ENCODE measurements at regions of chr2 and their contacts with region 1.

Region 1: GRCh38 chr2:97798416-97798815 is 85.0 kb downstream of the ZAP70 start:
- DNase-seq: no peak
- ATAC-seq: no peak
- H3K4me3 ChIP-seq: no peak overlapping the region
- H3K4me3 Mint-ChIP-seq: no peak overlapping the region
- H3K27ac ChIP-seq: no peak overlapping the region
- H3K27ac Mint-ChIP-seq: no peak overlapping the region
- H3K4me1 ChIP-seq: no peaks in the 10 kb centered on the region
- H3K4me1 Mint-ChIP-seq: no peaks in the 10 kb centered on the region
- H3K27me3 ChIP-seq: no peaks in the 10 kb centered on the region
- H3K27me3 Mint-ChIP-seq: no peaks in the 10 kb centered on the region
- CTCF ChIP-seq: no peak

Region 2: DNA sequence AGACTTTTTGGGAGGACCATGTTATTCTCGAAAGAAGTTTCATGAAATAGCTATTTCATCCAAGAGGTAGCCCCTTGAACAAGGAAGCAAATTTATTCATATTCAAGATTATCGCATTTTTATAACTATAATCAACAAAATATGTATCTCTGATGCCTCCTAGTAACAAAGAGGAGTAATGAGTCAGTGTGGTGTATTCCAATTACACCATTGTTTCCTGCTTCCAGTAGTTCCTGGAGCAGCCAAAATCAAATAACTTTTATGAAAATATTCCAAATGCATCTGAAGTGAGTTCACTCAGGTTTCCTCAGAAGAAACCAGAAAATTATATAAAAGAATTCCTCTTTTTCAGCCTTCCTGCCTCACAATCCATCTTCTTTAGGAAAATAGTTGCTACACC is 251.7 kb before region 1 on chr2:
- CTCF ChIA-PET with region 1: no interaction called
- POLR2A ChIA-PET with region 1: no interaction called
- intact Hi-C with region 1: no loop called
- DNase-seq: no peak
- ATAC-seq: no peak
- H3K4me3 ChIP-seq: no peak overlapping the region
- H3K4me3 Mint-ChIP-seq: no peak overlapping the region
- H3K27ac ChIP-seq: no peak overlapping the region
- H3K27ac Mint-ChIP-seq: no peak overlapping the region
- H3K4me1 ChIP-seq: no peaks in the 10 kb centered on the region
- H3K4me1 Mint-ChIP-seq: no peaks in the 10 kb centered on the region
- H3K27me3 ChIP-seq: no peaks in the 10 kb centered on the region
- H3K27me3 Mint-ChIP-seq: no peaks in the 10 kb centered on the region
- CTCF ChIP-seq: no peak

Region 3: DNA sequence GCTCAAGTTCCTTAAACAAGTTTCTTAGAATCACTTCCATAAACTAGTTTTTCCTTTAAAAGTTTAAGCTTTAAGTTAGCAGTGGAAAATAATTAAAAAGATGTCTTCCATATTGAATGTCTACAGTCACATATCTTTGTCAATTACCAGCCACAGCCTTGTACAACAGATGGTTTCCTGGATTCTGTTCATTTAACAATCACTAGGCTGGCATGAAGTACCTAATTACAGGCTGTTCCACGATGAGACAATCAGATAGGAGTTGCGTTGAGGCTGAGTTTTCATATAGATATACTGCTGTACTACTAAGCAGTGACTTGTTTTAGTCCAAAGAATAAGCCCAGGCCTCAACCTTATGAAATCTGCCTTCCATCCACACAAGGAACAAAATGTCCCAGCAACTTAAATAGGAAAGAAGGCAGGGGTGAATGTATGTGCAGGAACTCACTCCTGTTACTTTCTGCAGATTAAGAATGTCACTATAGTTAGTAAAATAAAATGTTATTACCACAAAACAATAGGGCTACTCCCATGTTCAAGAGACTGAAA is 46.0 kb after region 1 on chr2:
- CTCF ChIA-PET with region 1: no interaction called
- POLR2A ChIA-PET with region 1: no interaction called
- intact Hi-C with region 1: loop called in 1 of 2 experiments (anchors 1 kb)
- DNase-seq: no peak
- ATAC-seq: no peak
- H3K4me3 ChIP-seq: no peak overlapping the region
- H3K4me3 Mint-ChIP-seq: no peak overlapping the region
- H3K27ac ChIP-seq: no peak overlapping the region
- H3K27ac Mint-ChIP-seq: no peak overlapping the region
- H3K4me1 ChIP-seq: no peaks in the 10 kb centered on the region
- H3K4me1 Mint-ChIP-seq: peaks cover 17% of the 10 kb centered on the region
- H3K27me3 ChIP-seq: no peaks in the 10 kb centered on the region
- H3K27me3 Mint-ChIP-seq: no peaks in the 10 kb centered on the region
- CTCF ChIP-seq: no peak